ENCODE measurements at regions of chr11 and their contacts with region 1.

Region 1: GRCh38 chr11:14454861-14455632 is 44.6 kb downstream of the COPB1 start:
- DNase-seq: peak in 4 of 42 donors; percentile 3 to 16 (median 6)

Region 2: GRCh38 chr11:14300661-14301304 is 154.3 kb before region 1 on chr11:
- intact Hi-C with region 1: loop called (anchors 5 kb)
- DNase-seq: peak in 41 of 42 donors; percentile 14 to 86 (median 64)

Region 3: DNA sequence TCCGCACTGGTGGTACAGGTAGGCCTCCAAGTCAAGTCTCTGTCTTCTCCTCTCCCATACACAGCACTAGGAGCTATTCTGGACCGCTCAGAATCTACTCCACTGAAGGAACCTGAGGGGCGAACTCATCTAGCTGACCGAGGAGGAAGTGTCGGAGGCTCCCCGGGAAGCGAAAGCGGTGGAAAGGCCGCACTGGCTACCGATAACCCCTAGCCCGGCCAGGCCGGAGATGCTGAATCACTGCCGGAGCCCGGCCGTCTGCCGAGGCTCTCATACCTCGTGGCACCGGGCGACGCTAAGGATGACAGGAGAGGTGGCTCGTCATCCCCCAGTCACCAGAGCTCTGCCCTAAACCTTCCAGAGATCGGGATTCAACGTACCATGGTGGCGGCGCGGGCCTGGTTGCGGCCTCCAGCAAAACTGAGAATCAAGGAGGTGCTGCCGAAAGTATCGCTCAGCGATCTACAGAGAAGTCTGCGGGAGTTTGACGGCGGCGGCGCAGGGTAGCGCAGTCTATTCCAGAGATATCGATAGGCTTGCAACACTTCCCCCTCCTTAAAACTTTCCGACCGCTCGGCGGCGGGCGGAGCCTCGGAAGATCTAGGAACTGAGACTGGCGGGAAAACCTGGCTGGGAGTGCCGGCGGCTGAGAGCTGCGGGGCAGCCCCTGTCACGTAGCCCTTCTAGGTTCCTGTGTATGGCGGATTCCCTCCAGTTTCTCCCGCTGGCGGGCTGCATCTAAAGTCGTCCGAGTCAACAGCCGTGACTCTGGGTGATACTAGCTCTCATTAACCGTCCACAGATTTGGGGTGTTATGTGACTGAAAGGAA is 65.1 kb after region 1 on chr11 and contains the start of gene PSMA1:
- intact Hi-C with region 1: no loop called
- DNase-seq: peak; percentile 87 to 98 (median 94)

Measured in head of caudate nucleus (tissue), 42 donors.